K562 (cell line): ENCODE measurements at regions of chr2 and their contacts with region 1.

Region 1: GRCh38 chr2:27754138-27754588 is 17.4 kb upstream of the MRPL33 start:
- DNase-seq: peak; percentile 72 to 86 (median 73)
- ATAC-seq: peak; percentile 91
- H3K4me3 ChIP-seq: no peak overlapping the region
- H3K27ac ChIP-seq: no peak overlapping the region
- H3K4me1 ChIP-seq: peaks cover 10 to 18% of the 10 kb centered on the region in 2 experiments
- H3K27me3 ChIP-seq: no peaks in the 10 kb centered on the region
- CTCF ChIP-seq: peak; percentile 93 to 96 (median 95)
- EP300 ChIP-seq: no peak; the same call in 1 of the 2 replicates
- POLR2A ChIP-seq: no peak
- RAD21 ChIP-seq: peak; percentile 93 to 95

Region 2: GRCh38 chr2:27683390-27684071 is 70.6 kb before region 1 on chr2:
- CTCF ChIA-PET with region 1: interaction called, 11 read pairs
- POLR2A ChIA-PET with region 1: no interaction called
- in situ Hi-C with region 1: no loop called
- intact Hi-C with region 1: no loop called
- DNase-seq: peak; percentile 74 to 94 (median 78)
- ATAC-seq: peak; percentile 95
- H3K4me3 ChIP-seq: no peak overlapping the region
- H3K27ac ChIP-seq: no peak overlapping the region; the same call in 2 of the 3 replicates
- H3K4me1 ChIP-seq: peaks cover 0 to 2% of the 10 kb centered on the region in 2 experiments; a peak in 1 of 5 replicates
- H3K27me3 ChIP-seq: no peaks in the 10 kb centered on the region
- CTCF ChIP-seq: peak; percentile 97 to 100 (median 99)
- EP300 ChIP-seq: no peak
- POLR2A ChIP-seq: no peak
- RAD21 ChIP-seq: peak; percentile 81 to 94

Region 3: GRCh38 chr2:27723372-27724144 is 30.6 kb before region 1 on chr2:
- CTCF ChIA-PET with region 1: interaction called, 5 read pairs
- POLR2A ChIA-PET with region 1: interaction called, 3 read pairs
- in situ Hi-C with region 1: no loop called
- intact Hi-C with region 1: loop called (anchors 1 kb)
- DNase-seq: peak; percentile 65 to 67 (median 66)
- ATAC-seq: peak; percentile 92
- H3K4me3 ChIP-seq: no peak overlapping the region
- H3K27ac ChIP-seq: no peak overlapping the region
- H3K4me1 ChIP-seq: peaks cover 0 to 4% of the 10 kb centered on the region in 2 experiments; a peak in 2 of 5 replicates
- H3K27me3 ChIP-seq: peaks cover 5 to 11% of the 10 kb centered on the region in 2 experiments; a peak in 2 of 5 replicates
- CTCF ChIP-seq: peak; percentile 71 to 82 (median 80)
- EP300 ChIP-seq: no peak
- POLR2A ChIP-seq: no peak
- RAD21 ChIP-seq: peak; percentile 48 to 76

Region 4: GRCh38 chr2:27771548-27772335 is 17.6 kb after region 1 on chr2 and contains the start of gene MRPL33:
- CTCF ChIA-PET with region 1: no interaction called
- POLR2A ChIA-PET with region 1: interaction called, 18 read pairs
- in situ Hi-C with region 1: no loop called
- intact Hi-C with region 1: no loop called
- DNase-seq: peak; percentile 94 to 96 (median 95)
- ATAC-seq: peak; percentile 98
- H3K4me3 ChIP-seq: peak within 1 kb of the TSS; percentile 60
- H3K27ac ChIP-seq: peak within 1 kb of the TSS; percentile 79
- H3K4me1 ChIP-seq: peaks cover 2 to 8% of the 10 kb centered on the region in 2 experiments; a peak in 1 of 5 replicates
- H3K27me3 ChIP-seq: peaks cover 0 to 10% of the 10 kb centered on the region in 2 experiments; a peak in 2 of 5 replicates
- CTCF ChIP-seq: no peak
- EP300 ChIP-seq: peak; percentile 35; the same call in 1 of the 2 replicates
- POLR2A ChIP-seq: peak; percentile 96
- RAD21 ChIP-seq: no peak; a peak in 1 of 4 replicates
- polyA plus RNA-seq, gene MRPL33: 313 to 338 TPM

Region 5: GRCh38 chr2:28452534-28453081 is 698.4 kb after region 1 on chr2:
- CTCF ChIA-PET with region 1: no interaction called
- POLR2A ChIA-PET with region 1: no interaction called
- in situ Hi-C with region 1: no loop called
- intact Hi-C with region 1: loop called (anchors 2 kb)
- DNase-seq: peak; percentile 73 to 83 (median 78)
- ATAC-seq: peak; percentile 95
- H3K4me3 ChIP-seq: no peak overlapping the region
- H3K27ac ChIP-seq: no peak overlapping the region
- H3K4me1 ChIP-seq: peaks cover 10% of the 10 kb centered on the region in 2 experiments; a peak in 4 of 5 replicates
- H3K27me3 ChIP-seq: peaks cover 0 to 23% of the 10 kb centered on the region in 2 experiments; a peak in 2 of 5 replicates
- CTCF ChIP-seq: peak; percentile 88 to 95 (median 93)
- EP300 ChIP-seq: no peak
- POLR2A ChIP-seq: no peak
- RAD21 ChIP-seq: peak; percentile 86 to 92